ENCODE measurements at regions of chr5 and their contacts with region 1.

Region 1: GRCh38 chr5:6096101-6096500 is 282.2 kb downstream of the MED10 start:
- DNase-seq: no peak

Region 2: DNA sequence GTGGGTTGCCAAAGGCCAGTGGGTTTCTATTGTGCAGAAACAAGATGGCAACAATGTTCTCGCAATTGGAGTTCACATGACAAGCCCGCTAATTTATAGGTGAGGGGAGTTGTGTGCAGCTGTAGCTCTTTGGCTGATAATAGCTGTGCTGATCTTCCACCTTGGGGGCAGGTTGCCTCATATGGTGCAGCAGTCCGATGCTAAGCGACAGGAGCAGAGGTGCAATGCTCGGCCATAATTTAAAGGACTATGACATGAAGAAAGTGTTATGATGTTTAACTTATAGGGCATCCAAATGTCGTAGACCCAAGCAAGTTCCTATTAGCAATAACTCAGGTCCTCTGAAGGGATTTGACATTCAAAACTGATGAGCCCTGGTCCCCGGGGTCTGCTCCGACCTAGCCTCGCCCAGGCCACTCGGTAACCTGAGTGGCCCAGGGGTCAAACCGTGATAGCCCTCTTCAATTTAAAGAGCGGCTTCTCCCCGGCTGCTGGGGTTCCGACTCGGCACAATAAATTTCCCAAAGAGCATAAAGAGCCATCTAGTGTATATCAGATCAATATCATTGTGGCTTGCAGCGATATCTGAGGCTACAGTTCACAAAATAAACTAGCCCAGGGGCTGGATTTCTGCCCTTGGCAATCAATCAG is 1776.5 kb before region 1 on chr5:
- intact Hi-C with region 1: loop called in 1 of 2 experiments (anchors 5 kb)
- DNase-seq: no peak

Region 3: DNA sequence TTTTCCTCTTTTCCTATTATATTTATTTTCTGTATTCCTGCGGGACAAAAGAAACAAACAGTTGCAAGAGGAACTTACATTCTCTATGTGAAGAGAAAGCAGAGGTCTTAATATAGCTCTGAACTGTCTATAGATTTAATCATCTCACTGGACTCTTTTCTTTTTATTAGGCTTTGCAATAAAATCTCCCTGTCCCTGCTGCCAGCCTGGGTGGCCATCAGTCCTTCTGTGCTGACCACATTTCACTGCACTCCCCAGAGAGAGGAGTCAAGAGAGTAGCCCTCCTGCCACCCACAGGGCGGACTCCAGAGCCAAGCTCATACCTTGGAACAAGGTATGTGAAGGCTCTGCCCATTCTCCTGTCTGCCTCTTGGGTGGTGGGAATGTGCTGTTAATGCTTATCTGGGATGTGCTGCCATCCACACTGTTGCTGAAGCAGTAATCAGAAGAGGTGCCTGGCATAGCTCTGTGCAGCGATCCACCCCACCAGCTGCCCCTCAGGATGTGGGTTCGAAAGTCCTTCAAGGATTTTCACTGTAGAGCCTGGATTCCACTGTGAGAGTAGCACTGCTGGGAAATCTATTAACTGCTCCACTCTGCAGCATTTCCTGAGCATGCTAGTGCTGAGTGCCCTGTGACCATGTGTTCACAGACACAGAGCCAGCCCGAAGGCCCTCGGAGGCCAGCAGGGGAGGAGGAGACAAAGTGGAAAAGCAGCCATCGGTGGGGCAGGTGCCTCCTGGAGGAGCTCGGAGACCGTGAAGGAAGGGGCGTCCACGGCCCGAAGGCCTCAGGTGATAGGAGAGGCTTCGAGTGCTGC is 52.4 kb before region 1 on chr5:
- intact Hi-C with region 1: no loop called
- DNase-seq: no peak

Measured in posterior vena cava (tissue), 2 donors.